ENCODE measurements at regions of chr9 and their contacts with region 1.

Region 1: GRCh38 chr9:16705121-16705604 is 165.3 kb downstream of the BNC2 start:
- DNase-seq: peak; percentile 56 to 97
- H3K4me3 ChIP-seq: peak overlapping the region in 1 of 2 donors; percentile 64
- H3K27ac ChIP-seq: peak overlapping the region; percentile 85 to 94
- H3K4me1 ChIP-seq: peaks cover 0 to 35% of the 10 kb centered on the region in 2 donors
- H3K27me3 ChIP-seq: no peaks in the 10 kb centered on the region
- CTCF ChIP-seq: no peak

Region 2: DNA sequence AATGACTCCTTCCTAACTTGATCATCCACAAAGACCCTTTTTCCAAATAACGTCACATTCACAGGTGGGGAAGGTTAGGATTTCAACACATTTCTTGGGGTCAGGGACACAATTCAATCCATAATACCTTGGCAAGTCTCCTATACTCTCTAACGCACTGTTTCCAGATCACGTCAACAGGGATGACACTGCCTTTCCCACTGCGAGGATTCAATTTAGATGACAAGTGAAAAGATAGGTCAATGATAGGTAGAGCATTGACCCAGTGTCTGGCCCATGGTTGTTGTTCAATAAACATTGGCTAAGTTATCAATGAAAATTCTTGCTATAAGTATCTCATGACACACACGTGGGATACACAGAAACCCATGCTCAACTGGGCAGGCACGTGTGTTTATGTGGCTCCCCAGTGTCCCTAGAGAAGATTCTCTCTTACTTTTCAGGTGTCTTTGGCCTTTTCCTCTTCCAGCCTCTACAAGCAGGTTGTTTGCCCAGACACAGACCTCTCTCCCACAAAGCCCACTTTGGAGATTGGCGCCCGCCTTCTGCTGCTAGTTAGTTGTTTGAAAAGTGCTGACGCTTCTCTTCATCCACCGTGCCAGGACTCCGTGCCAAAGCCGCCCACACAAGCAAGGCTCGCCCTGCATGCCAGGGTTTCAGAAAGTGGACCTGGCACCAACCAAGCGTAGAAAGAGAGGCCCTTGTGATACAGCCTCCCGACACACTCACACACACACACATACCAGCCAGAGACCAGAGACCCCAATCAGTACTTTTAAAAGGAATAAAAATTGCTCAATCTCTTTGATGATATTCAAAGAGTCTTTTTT is 429.2 kb before region 1 on chr9:
- intact Hi-C with region 1: loop called (anchors 10 kb)
- DNase-seq: peak in 1 of 2 donors; percentile 79
- H3K4me3 ChIP-seq: no peak overlapping the region
- H3K27ac ChIP-seq: no peak overlapping the region
- H3K4me1 ChIP-seq: peaks cover 0 to 11% of the 10 kb centered on the region in 2 donors
- H3K27me3 ChIP-seq: no peaks in the 10 kb centered on the region
- CTCF ChIP-seq: no peak

Region 3: DNA sequence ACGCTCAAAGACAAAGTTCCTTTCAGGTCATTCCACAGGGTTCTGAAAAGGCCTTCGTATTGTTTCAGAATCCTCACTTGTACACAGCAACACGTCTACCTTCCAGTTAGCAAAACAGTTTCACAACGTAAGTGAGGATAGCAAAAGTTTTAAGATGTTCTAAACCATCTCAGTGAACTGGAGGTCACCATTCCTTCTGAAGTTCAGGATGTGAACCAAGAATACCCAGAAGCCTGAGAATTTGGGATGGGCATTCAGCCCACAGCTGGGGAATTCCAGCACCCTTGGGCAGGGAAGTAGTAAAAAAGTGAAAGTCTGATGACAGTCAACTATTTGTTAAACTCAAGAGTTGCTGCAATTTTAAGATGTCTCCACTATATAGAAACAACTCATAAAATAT is 59.2 kb before region 1 on chr9:
- intact Hi-C with region 1: loop called (anchors 5 kb)
- DNase-seq: no peak
- H3K4me3 ChIP-seq: no peak overlapping the region
- H3K27ac ChIP-seq: no peak overlapping the region
- H3K4me1 ChIP-seq: no peaks in the 10 kb centered on the region
- H3K27me3 ChIP-seq: no peaks in the 10 kb centered on the region
- CTCF ChIP-seq: no peak

Region 4: GRCh38 chr9:16726718-16727451 is 21.7 kb after region 1 on chr9:
- intact Hi-C with region 1: loop called (anchors 1 kb)
- DNase-seq: peak in 1 of 2 donors; percentile 91
- H3K4me3 ChIP-seq: peak overlapping the region; percentile 69 to 76
- H3K27ac ChIP-seq: peak overlapping the region; percentile 92 to 95
- H3K4me1 ChIP-seq: peaks cover 0 to 2% of the 10 kb centered on the region in 2 donors
- H3K27me3 ChIP-seq: no peaks in the 10 kb centered on the region
- CTCF ChIP-seq: no peak

Region 5: DNA sequence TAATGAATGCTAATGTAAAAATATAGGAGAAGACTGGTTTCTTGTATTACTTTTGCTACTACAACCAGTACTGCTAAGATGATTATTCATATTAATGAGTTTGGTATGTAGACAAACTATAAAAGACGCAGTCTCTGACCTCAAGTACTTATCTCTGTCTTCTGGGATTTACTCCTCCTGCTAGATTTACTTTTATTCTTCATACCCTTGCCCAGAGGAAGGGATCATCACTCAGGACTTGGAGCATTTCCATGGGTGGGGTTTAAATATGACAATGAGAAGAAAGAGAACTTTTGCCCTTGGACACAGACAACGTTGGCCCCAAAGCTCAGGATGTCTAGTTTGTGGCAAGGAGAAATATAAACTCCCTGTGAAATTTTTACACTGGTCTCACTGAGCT is 39.2 kb after region 1 on chr9:
- intact Hi-C with region 1: no loop called
- DNase-seq: no peak
- H3K4me3 ChIP-seq: no peak overlapping the region
- H3K27ac ChIP-seq: no peak overlapping the region
- H3K4me1 ChIP-seq: no peaks in the 10 kb centered on the region
- H3K27me3 ChIP-seq: no peaks in the 10 kb centered on the region
- CTCF ChIP-seq: no peak

Region 6: GRCh38 chr9:16985559-16986348 is 280.6 kb after region 1 on chr9:
- intact Hi-C with region 1: loop called (anchors 1 kb)
- DNase-seq: peak; percentile 80 to 96
- H3K4me3 ChIP-seq: no peak overlapping the region
- H3K27ac ChIP-seq: peak overlapping the region; percentile 86 to 90
- H3K4me1 ChIP-seq: peaks cover 0 to 18% of the 10 kb centered on the region in 2 donors
- H3K27me3 ChIP-seq: no peaks in the 10 kb centered on the region
- CTCF ChIP-seq: no peak